MCF 10A (cell line): ENCODE measurements at regions of chr11 and their contacts with region 1.

Region 1: GRCh38 chr11:76235233-76236091 is 29.2 kb upstream of the WNT11 start:
- DNase-seq: peak; percentile 92
- H3K4me3 Mint-ChIP-seq: peak overlapping the region; percentile 99
- H3K27ac Mint-ChIP-seq: peak overlapping the region; percentile 85
- H3K4me1 Mint-ChIP-seq: peaks cover 6% of the 10 kb centered on the region
- H3K27me3 Mint-ChIP-seq: no peaks in the 10 kb centered on the region
- CTCF ChIP-seq: no peak

Region 2: GRCh38 chr11:76266270-76267090 is 31.0 kb after region 1 on chr11:
- CTCF ChIA-PET with region 1: no interaction called
- POLR2A ChIA-PET with region 1: interaction called, 20 read pairs
- intact Hi-C with region 1: loop called (anchors 1 kb)
- DNase-seq: peak; percentile 91
- H3K4me3 Mint-ChIP-seq: peak overlapping the region; percentile 29
- H3K27ac Mint-ChIP-seq: peak overlapping the region; percentile 97
- H3K4me1 Mint-ChIP-seq: peaks cover 9% of the 10 kb centered on the region
- H3K27me3 Mint-ChIP-seq: no peaks in the 10 kb centered on the region
- CTCF ChIP-seq: no peak